Activated B cell treated with CpG ODN at 0.5 μM for 24 hours (primary cell): ENCODE measurements at regions of chr1 and their contacts with region 1.

Region 1: DNA sequence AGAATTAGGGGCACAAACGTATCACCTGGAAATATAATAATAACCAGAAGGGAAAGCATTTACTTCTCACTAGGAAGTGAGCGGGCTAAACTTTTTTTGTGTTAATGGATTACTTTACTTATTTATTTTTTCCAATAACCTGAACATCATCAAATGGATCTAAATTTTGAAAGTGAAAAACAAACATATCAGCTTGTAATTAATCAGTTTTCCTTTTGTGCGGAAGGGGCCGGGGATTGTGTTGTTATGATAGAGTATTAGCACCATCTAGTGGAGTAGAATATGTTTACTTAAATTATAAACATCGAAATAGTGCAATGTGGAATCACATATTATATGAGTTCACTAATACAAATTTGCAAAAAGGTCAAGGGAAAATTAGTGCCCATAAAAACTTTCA is 9.0 kb downstream of the CFH start:
- DNase-seq: no peak
- ATAC-seq: no peak
- H3K4me3 Mint-ChIP-seq: no peak overlapping the region
- H3K27ac Mint-ChIP-seq: no peak overlapping the region
- H3K4me1 Mint-ChIP-seq: peaks cover 2% of the 10 kb centered on the region
- H3K27me3 Mint-ChIP-seq: no peaks in the 10 kb centered on the region
- CTCF ChIP-seq: no peak

Region 2: GRCh38 chr1:196372896-196373536 is 287.8 kb before region 1 on chr1:
- CTCF ChIA-PET with region 1: no interaction called
- POLR2A ChIA-PET with region 1: no interaction called
- intact Hi-C with region 1: loop called (anchors 5 kb)
- DNase-seq: no peak
- ATAC-seq: peak; percentile 28
- H3K4me3 Mint-ChIP-seq: no peak overlapping the region
- H3K27ac Mint-ChIP-seq: no peak overlapping the region
- H3K4me1 Mint-ChIP-seq: no peaks in the 10 kb centered on the region
- H3K27me3 Mint-ChIP-seq: no peaks in the 10 kb centered on the region
- CTCF ChIP-seq: no peak